AG04449 (cell line): ENCODE measurements at regions of chr10 and their contacts with region 1.

Region 1: GRCh38 chr10:70363971-70364771 is 18.3 kb downstream of the LRRC20 start:
- DNase-seq: peak; percentile 95
- H3K4me3 ChIP-seq: no peak overlapping the region
- CTCF ChIP-seq: peak; percentile 95

Region 2: DNA sequence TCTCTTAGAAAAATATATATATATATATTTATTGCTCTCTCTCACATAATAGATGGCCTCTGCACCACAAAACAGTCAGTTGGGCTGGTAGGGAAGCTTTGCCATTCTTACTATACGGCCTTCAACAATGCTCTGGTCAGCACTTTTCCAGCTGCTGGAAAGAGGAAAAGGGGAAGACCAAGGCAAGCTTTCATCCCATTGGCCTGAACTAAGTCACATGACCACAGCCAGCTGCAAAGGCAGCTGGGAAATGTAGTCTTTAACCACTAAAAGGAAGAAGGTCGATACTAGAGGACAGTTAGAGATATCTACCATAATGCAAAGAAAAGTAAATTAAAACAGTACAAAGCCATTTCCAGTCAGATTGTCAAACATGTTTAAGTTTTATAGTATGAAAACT is 369.9 kb before region 1 on chr10:
- CTCF ChIA-PET with region 1: no interaction called
- POLR2A ChIA-PET with region 1: no interaction called
- DNase-seq: no peak
- H3K4me3 ChIP-seq: no peak overlapping the region
- CTCF ChIP-seq: no peak

Region 3: DNA sequence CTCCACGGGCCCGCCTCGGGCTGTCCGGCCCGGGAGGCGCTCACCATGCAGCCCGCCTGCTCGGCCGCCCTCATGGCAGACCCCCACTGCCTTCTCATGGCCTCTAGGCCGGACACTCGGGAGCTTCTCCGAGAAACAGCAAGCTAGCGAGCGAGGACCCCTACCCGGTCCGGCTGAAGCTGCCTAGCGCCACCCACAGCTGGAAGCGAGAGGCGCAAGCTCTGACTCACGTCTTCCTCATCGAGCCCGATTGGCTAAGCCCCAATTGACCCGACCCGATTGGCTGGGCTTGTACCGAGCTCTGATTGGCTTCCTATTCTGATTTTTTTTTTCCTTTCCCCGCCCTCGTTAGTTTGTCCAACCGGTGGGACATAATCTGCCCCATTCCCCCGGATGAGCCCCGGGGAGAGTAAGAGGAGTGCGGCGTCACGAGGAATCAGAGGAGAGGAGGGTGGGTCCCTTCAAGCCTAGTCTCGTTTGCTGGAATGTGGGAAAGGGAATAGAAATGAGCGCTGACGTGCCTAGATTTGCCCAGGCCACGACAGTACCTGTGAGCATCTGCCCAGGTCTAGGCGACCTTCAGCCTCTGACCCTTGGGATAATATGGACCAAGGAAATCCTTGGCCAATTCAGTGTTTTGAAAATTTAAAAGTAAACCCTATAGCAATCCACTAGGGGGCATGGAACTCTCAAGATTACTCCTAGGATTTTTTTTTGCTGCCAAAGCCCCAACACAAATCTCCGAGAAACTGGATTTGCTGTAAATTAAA is 217.5 kb before region 1 on chr10 and contains the start of gene TYSND1:
- CTCF ChIA-PET with region 1: interaction called, 52 read pairs
- POLR2A ChIA-PET with region 1: no interaction called
- DNase-seq: peak; percentile 82
- H3K4me3 ChIP-seq: peak within 1 kb of the TSS; percentile 66
- CTCF ChIP-seq: peak; percentile 91

Region 4: GRCh38 chr10:70221030-70221429 is 143.1 kb before region 1 on chr10:
- CTCF ChIA-PET with region 1: interaction called, 533 read pairs
- POLR2A ChIA-PET with region 1: interaction called, 5 read pairs
- DNase-seq: no peak
- H3K4me3 ChIP-seq: no peak overlapping the region
- CTCF ChIP-seq: no peak

Region 5: DNA sequence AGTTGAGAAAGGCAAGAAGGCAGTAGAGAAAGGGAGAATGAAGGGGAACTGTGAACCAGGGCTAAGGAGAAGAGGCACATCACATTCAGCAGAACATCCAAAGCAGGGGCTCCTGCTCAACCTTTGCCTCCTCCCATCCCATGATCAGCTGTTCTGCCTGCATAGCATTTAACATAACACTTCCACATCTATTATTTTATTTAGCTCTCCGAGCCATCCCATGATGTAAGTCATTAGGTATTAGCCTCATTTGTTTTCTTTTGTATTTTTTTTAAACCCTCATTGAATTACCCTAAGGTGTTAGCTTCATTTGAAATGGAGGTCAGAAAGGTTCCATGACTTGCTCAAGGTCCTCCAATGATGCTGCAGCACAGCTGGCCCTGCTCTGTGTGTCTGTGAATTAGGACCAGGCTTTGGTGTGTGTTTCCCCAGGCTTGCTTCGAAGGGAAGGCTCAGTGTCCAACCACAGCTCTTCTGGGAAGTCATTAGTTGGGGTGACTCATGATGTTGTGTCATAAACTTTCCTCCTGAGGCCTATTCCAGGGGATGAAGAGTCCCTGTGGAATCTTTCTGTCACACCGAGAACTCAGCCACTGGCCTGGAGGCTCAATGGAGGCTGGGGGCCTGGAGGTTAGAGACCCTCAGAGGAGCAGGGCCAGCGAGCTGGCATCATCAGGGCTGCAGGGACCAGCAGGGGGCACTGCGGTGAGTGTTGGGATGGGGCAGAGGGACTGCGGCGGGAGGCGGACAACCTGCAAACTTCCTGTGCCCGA is 96.8 kb before region 1 on chr10:
- CTCF ChIA-PET with region 1: interaction called, 13 read pairs
- POLR2A ChIA-PET with region 1: no interaction called
- DNase-seq: peak; percentile 80
- H3K4me3 ChIP-seq: no peak overlapping the region
- CTCF ChIP-seq: peak; percentile 20

Region 6: GRCh38 chr10:70348228-70348850 is 15.8 kb before region 1 on chr10:
- CTCF ChIA-PET with region 1: interaction called, 161 read pairs
- POLR2A ChIA-PET with region 1: no interaction called
- DNase-seq: no peak
- H3K4me3 ChIP-seq: no peak overlapping the region
- CTCF ChIP-seq: peak; percentile 59